Right ventricle myocardium inferior (tissue), 1 donor: ENCODE measurements at regions of chr13 and their contacts with region 1.

Region 1: DNA sequence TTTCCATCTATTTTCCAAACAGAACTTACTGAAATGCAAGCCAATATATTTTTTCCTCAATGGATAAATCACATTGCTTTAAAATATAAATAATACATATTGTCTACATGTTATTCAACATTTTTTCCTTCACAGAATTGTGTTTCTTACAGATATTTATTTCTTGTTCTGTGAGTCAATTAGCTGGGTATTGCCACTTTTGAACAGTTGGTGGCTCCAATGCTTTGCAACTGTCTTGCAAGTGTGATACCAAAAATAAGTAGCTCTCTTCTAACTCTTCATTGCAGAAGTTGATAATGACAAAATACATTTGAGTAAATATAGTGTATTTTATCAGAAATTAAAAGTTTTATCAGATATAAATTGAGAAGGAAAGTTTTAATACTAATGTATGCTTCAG is 17.1 kb upstream of the GPC5 start:
- DNase-seq: no peak
- ATAC-seq: no peak

Region 2: GRCh38 chr13:91722267-91722884 is 341.0 kb after region 1 on chr13:
- intact Hi-C with region 1: loop called (anchors 5 kb)
- DNase-seq: no peak
- ATAC-seq: no peak

Region 3: DNA sequence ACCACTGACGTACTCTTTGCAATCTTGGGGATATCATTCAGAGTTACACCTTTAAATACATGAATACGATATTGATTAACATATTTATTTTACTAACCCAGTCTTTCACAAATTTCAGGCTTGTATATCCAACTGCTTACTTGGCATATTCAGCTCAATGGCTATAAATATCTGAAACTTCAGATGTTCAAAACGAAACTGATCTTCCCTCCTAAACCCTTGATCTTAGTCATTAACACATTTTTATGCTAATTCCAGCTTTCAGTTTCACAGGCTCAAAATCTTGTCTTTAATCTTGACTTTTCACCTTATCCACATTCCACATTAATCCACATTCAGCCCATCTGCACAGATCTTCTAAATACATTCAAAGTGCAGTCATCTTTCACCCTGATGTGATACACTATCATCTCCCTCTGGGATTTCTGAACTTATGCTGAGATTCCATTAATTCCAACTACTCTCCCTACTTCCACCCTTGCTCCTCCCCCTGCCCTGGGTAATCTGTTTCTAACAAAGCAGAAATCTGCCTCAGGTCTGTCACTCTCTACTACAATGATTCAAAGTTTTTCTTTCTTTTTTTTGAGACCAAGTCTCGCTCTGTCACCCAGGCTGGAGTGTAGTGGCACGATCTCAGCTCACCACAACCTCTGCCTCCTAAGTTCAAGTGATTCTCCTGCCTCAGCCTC is 404.2 kb after region 1 on chr13:
- intact Hi-C with region 1: loop called (anchors 5 kb)
- DNase-seq: no peak
- ATAC-seq: no peak